ENCODE measurements at regions of chr6 and their contacts with region 1.

Region 1: DNA sequence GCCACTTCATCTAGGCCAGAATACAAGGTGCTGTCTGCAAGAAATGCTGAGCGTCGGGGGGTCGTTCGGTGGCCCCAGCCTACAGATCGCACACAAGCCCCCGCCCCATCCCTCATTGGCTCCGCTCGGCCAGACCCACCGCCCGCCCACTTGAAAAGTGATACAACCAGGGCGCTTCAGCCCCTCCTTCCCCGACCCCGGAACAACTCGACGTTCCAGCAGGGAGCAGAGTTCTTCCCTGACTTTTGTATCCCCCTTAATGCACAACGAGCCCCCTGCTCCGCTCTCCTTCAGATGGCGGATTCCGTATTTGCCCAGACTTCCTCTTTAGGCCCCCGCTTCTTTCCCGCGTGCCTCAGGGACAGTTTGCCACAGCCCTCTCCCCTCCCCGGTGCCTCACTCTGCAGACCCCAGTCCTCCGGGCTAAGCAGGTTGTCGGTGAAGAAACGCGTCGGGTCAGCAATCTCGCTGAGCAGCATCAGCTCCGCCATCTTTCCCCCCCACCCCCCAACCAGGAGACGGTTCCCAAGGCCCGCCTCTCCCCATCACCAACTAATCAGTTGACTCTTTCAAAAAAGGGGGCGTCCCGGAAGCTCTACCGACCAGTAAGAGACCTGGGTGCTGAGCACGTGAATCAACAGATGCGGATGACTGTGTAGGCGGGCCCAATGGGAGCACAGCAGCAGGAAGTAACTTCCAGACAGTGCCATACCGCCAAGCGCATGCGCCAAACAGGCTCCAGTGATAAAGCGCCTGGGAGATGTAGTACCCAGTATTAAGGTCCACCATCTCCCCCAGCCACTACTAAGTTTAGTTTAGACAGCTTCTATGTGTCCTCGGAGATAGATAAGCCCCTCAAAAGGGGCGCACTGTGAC is at the start of gene ATF6B:
- DNase-seq: peak; percentile 92
- H3K4me3 ChIP-seq: peak within 1 kb of the TSS; percentile 75 to 97
- H3K27ac ChIP-seq: peak within 1 kb of the TSS; percentile 90 to 95
- H3K4me1 ChIP-seq: peaks cover 18 to 22% of the 10 kb centered on the region in 2 experiments; a peak in 3 of 4 replicates
- H3K27me3 ChIP-seq: no peaks in the 10 kb centered on the region
- CTCF ChIP-seq: no peak
- EP300 ChIP-seq: no peak
- RAD21 ChIP-seq: no peak
- polyA plus RNA-seq, gene ATF6B: 61.3 and 73.0 TPM in 2 replicates

Region 2: DNA sequence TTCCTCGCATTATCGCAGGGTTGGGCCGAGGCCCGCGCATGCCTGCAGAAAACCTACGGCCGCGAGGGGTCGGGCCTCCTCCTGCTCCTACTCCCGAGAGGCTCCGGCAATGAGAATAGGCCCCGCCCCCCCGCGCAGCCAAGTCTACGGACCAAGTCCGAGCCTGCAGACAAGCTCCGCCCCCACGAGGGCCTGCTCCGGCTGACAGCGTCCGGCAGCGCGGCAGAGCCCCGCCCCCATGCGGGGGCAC is 67.6 kb after region 1 on chr6:
- CTCF ChIA-PET with region 1: interaction called, 17 read pairs
- POLR2A ChIA-PET with region 1: interaction called, 4 read pairs
- DNase-seq: peak; percentile 94
- H3K4me3 ChIP-seq: peak overlapping the region; percentile 83 to 95
- H3K27ac ChIP-seq: peak overlapping the region in 1 of 2 experiments; percentile 100; a peak in 3 of 4 replicates
- H3K4me1 ChIP-seq: peaks cover 6 to 23% of the 10 kb centered on the region in 2 experiments; a peak in 1 of 4 replicates
- H3K27me3 ChIP-seq: no peaks in the 10 kb centered on the region
- CTCF ChIP-seq: no peak; the same call in 1 of the 2 replicates
- EP300 ChIP-seq: no peak
- RAD21 ChIP-seq: no peak